ENCODE measurements at regions of chr17 and their contacts with region 1.

Region 1: GRCh38 chr17:55549140-55549539 is 37.9 kb upstream of the SMIM36 start:
- DNase-seq: peak in 2 of 4 experiments; percentile 39 to 60
- ATAC-seq: peak; percentile 94
- H3K4me3 ChIP-seq: no peak overlapping the region
- H3K27ac ChIP-seq: no peak overlapping the region
- H3K4me1 ChIP-seq: peaks cover 0 to 3% of the 10 kb centered on the region in 2 experiments; a peak in 2 of 5 replicates
- H3K27me3 ChIP-seq: no peaks in the 10 kb centered on the region
- CTCF ChIP-seq: peak; percentile 56 to 86 (median 85); a peak in 5 of 6 replicates
- EP300 ChIP-seq: no peak
- POLR2A ChIP-seq: no peak
- RAD21 ChIP-seq: peak; percentile 61 to 95

Region 2: DNA sequence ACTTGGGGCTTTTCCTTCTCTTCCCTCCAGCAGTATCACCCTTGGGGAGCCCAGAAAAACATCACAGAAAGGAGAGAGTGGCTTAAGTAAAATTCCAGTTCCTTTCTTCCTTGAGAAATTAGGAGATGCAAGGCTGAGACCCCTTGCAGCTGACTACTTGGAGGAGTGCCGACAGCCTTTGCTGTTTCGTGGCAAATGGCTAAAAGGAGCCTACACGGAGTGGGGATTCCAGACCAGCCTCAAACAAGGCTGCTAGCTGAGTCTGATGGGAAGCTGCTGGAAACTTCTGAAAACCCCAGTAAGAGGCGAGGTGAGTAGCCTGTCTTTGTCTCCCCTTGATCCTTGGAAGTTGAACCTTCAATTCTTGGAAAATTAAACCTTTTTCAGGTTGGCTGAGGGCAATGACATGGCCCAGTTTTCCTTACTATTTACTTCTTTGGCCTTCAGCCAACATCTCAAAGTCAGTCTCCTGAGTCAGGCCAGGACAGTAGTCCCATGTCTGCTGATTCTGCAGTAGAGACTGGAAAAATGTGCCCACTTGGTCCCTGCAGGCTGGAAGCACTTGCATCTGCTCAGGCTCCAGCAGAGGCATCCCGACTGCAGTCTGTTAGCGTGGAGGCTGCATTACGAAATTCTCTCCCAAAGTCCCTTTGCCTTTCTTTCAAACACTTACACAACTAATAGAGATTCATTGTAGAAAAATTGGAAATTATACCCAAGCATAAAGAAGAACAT is 61.3 kb before region 1 on chr17:
- CTCF ChIA-PET with region 1: no interaction called
- POLR2A ChIA-PET with region 1: no interaction called
- in situ Hi-C with region 1: no loop called
- intact Hi-C with region 1: no loop called
- DNase-seq: no peak
- ATAC-seq: no peak; the same call in 2 of the 3 replicates
- H3K4me3 ChIP-seq: no peak overlapping the region
- H3K27ac ChIP-seq: no peak overlapping the region
- H3K4me1 ChIP-seq: no peaks in the 10 kb centered on the region
- H3K27me3 ChIP-seq: peaks cover 0 to 4% of the 10 kb centered on the region in 2 experiments; a peak in 1 of 5 replicates
- CTCF ChIP-seq: no peak
- EP300 ChIP-seq: no peak
- POLR2A ChIP-seq: no peak
- RAD21 ChIP-seq: no peak

Region 3: GRCh38 chr17:55567240-55568214 is 18.4 kb after region 1 on chr17:
- CTCF ChIA-PET with region 1: no interaction called
- POLR2A ChIA-PET with region 1: no interaction called
- in situ Hi-C with region 1: no loop called
- intact Hi-C with region 1: no loop called
- DNase-seq: peak; percentile 29 to 75 (median 53)
- ATAC-seq: peak; percentile 81
- H3K4me3 ChIP-seq: no peak overlapping the region
- H3K27ac ChIP-seq: peak overlapping the region; percentile 75
- H3K4me1 ChIP-seq: peaks cover 15 to 19% of the 10 kb centered on the region in 2 experiments
- H3K27me3 ChIP-seq: no peaks in the 10 kb centered on the region
- CTCF ChIP-seq: no peak
- EP300 ChIP-seq: peak; percentile 70; the same call in 1 of the 2 replicates
- POLR2A ChIP-seq: no peak
- RAD21 ChIP-seq: no peak

Region 4: GRCh38 chr17:55587608-55588139 is 38.5 kb after region 1 on chr17:
- CTCF ChIA-PET with region 1: no interaction called
- POLR2A ChIA-PET with region 1: no interaction called
- in situ Hi-C with region 1: no loop called
- intact Hi-C with region 1: loop called (anchors 5 kb)
- DNase-seq: no peak
- ATAC-seq: peak; percentile 62
- H3K4me3 ChIP-seq: no peak overlapping the region
- H3K27ac ChIP-seq: no peak overlapping the region
- H3K4me1 ChIP-seq: no peaks in the 10 kb centered on the region; a peak in 2 of 5 replicates
- H3K27me3 ChIP-seq: no peaks in the 10 kb centered on the region
- CTCF ChIP-seq: no peak
- EP300 ChIP-seq: no peak
- POLR2A ChIP-seq: no peak
- RAD21 ChIP-seq: no peak

Region 5: DNA sequence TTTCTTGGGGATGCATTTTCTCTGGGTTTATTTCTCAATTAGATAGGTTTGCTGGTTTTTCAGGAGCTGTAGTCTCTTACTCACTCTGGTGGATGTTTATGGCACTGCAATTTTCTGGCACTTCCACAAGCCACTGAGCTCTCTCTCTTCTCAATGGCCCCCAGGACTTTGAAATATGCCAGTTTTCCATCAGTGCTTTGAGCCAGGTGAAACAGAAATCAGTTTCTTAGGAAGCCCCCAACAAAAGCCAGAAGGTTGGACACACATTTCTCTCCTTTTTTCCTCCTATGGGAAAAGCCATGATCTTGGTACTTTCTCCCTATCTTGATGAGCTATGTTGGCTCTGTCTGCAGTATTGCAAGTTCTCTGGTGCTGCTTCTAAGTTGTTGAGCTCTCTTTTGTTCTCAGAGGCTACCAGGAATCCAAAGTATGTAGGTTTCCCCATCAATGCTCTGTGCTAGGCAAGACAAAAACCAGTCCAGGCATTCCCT is 52.8 kb after region 1 on chr17:
- CTCF ChIA-PET with region 1: no interaction called
- POLR2A ChIA-PET with region 1: no interaction called
- in situ Hi-C with region 1: no loop called
- intact Hi-C with region 1: loop called (anchors 1 kb)
- DNase-seq: peak; percentile 16 to 43 (median 21)
- ATAC-seq: peak; percentile 75
- H3K4me3 ChIP-seq: no peak overlapping the region
- H3K27ac ChIP-seq: no peak overlapping the region
- H3K4me1 ChIP-seq: no peaks in the 10 kb centered on the region; a peak in 1 of 5 replicates
- H3K27me3 ChIP-seq: no peaks in the 10 kb centered on the region; a peak in 1 of 5 replicates
- CTCF ChIP-seq: peak; percentile 61 to 78 (median 66)
- EP300 ChIP-seq: no peak
- POLR2A ChIP-seq: no peak
- RAD21 ChIP-seq: peak; percentile 65 to 93

Region 6: DNA sequence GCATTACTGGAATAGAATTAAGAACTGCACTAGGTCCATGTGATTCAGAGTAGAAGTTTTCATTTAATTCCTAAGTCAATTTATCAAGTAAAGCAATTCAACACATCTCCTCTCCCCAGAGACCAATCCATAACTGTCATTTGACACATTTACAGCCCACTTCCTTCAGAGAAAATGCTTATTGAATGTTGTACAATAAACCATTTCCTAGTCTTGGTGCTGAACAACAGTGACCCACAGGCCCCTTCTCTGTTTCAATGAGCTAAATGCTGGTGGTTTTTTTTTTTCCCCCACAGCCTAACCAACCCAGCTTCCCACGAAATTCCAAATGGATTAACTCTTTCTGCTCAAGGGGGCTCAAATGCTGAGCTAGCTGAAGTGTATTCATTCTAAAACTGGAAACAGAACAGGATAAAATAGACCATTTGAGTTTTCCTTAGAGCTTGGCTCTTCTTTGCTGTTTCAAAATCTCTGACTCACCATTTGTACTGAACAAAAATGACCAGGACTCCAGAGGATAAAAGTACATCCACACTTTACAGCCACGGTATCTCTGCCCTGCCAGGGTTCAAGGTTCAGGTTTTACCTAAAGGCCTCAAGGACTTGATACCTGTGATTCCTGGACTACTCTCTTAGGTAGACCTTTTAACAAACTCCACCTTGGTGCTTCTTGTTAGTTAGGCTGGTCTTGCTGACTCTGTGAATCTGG is 111.2 kb after region 1 on chr17:
- CTCF ChIA-PET with region 1: no interaction called
- POLR2A ChIA-PET with region 1: no interaction called
- in situ Hi-C with region 1: no loop called
- intact Hi-C with region 1: no loop called
- DNase-seq: no peak
- ATAC-seq: no peak
- H3K4me3 ChIP-seq: no peak overlapping the region
- H3K27ac ChIP-seq: no peak overlapping the region
- H3K4me1 ChIP-seq: peaks cover 0 to 31% of the 10 kb centered on the region in 2 experiments; a peak in 3 of 5 replicates
- H3K27me3 ChIP-seq: no peaks in the 10 kb centered on the region
- CTCF ChIP-seq: no peak
- EP300 ChIP-seq: no peak
- POLR2A ChIP-seq: no peak
- RAD21 ChIP-seq: no peak

Region 7: GRCh38 chr17:55717898-55718735 is 169.0 kb after region 1 on chr17:
- CTCF ChIA-PET with region 1: no interaction called
- POLR2A ChIA-PET with region 1: no interaction called
- in situ Hi-C with region 1: no loop called
- intact Hi-C with region 1: loop called (anchors 2 kb)
- DNase-seq: peak; percentile 42 to 83 (median 48)
- ATAC-seq: peak; percentile 83
- H3K4me3 ChIP-seq: no peak overlapping the region
- H3K27ac ChIP-seq: no peak overlapping the region
- H3K4me1 ChIP-seq: peaks cover 0 to 6% of the 10 kb centered on the region in 2 experiments; a peak in 3 of 5 replicates
- H3K27me3 ChIP-seq: no peaks in the 10 kb centered on the region
- CTCF ChIP-seq: peak; percentile 76 to 83 (median 78)
- EP300 ChIP-seq: no peak
- POLR2A ChIP-seq: no peak
- RAD21 ChIP-seq: peak; percentile 81 to 87